Esophagus muscularis mucosa (tissue), 4 donors: ENCODE measurements at regions of chr5 and their contacts with region 1.

Region 1: DNA sequence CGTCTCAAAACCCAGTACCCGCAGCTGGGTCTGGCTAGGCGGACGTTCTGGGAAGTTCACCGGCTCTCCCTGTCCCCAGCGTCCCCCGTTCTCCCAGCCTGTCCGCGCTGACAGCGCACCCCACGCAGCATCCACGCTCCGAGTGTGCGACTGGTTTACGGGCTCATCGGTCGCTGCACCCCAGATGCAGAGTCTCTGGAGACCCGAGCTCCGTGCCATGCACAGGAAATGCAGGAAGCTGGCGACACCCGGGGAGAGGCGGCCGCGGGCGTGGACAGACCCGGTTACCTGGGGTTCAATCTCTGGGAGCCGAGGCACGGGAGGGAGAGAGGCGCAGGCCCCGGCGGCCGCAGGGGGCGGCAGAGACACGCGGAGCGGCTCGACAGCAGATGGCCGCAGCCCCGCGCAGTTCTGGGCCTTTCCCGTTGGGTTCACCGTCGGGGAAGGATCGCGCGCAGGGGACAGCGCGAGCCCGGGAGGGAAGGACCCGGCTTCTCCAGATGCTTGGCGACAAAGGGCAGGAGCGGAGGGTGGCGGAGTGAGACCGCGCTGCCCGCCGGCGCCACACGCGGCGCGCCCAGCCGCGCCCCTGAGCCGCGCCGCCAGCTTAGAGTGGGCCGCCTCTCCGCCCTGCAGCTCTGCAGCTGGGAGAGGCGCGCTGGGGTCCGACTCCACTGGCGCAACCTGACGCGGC is 558 bp downstream of the SHROOM1 start:
- DNase-seq: no peak
- H3K4me3 ChIP-seq: peak overlapping the region; percentile 76 to 87 (median 82)
- H3K27ac ChIP-seq: peak overlapping the region; percentile 79 to 90 (median 86)
- H3K4me1 ChIP-seq: peaks cover 9 to 49% (median 34%) of the 10 kb centered on the region in 4 donors
- H3K27me3 ChIP-seq: peaks cover 0 to 15% (median 0%) of the 10 kb centered on the region in 4 donors
- CTCF ChIP-seq: peak; percentile 70 to 99 (median 85)
- EP300 ChIP-seq: no peak
- POLR2A ChIP-seq: no peak

Region 2: DNA sequence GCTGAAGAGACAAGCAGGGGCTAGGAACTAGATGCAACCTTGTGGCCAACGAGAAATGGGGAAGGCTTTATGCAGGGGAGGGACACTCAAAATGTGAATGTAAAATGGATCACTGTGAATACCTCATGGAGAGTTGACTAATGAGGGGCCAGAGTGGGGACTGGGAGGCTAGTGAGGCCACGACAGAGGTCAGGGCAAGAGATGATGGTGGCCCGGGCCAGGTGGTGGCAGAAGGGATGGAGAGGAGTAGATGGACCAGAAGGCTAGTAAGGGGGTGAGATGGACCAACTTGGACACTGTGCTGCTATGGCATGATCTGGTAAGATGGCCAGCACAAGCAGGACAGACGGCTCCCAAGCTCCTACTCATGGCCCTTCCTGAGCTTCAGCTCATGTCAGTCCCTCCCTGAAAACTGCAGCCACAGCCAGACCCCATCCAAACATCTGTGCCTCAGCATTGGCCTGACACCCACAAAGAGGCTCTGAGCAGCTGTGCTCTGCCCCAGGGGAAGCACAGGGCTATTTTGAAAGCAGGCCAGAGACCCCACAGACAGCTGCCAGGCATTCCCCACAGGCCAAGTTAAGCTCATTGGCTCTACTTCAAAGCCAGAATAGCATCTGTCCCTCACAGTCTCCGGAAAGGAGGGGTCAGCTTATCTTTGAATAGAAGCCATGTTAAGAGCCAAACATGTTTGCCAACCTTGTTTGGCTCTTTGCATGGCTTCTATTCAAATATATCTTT is 624.3 kb before region 1 on chr5:
- intact Hi-C with region 1: no loop called
- DNase-seq: no peak
- H3K4me3 ChIP-seq: no peak overlapping the region
- H3K27ac ChIP-seq: no peak overlapping the region
- H3K4me1 ChIP-seq: peaks cover 8 to 40% (median 13%) of the 10 kb centered on the region in 4 donors
- H3K27me3 ChIP-seq: no peaks in the 10 kb centered on the region
- CTCF ChIP-seq: no peak
- EP300 ChIP-seq: no peak
- POLR2A ChIP-seq: no peak

Region 3: DNA sequence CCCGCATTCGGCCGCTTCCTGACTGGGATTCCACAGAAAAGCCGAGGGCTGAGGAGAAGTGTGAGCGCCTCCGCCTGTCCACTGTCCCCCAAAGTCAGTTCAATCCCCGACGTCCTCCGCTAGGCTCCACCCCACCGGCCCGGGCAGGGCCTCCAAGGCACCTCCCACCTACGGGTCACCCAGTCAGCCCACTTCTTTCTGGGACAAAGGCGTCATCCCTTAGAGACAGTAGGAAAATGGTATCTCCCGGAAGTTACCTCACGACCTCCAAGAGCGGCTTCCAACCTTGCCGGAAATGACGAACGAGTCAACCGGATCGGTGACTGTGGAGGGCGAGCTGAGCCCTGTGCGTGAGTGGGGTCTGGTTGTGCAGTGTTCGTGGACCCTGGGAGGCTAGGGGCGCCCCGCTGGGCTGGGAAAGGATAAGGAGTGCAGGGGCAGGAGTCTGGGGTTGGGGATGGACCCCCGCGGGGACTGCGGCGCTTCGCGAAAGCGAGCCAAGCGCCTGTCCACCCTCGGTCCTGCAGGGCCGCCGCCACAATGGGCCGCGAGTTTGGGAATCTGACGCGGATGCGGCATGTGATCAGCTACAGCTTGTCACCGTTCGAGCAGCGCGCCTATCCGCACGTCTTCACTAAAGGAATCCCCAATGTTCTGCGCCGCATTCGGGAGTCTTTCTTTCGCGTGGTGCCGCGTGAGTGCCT is 36.6 kb after region 1 on chr5 and contains the starts of genes GDF9 and UQCRQ:
- intact Hi-C with region 1: loop called (anchors 5 kb)
- DNase-seq: peak; percentile 98
- H3K4me3 ChIP-seq: peak within 1 kb of the TSS; percentile 70 to 91 (median 82)
- H3K27ac ChIP-seq: peak within 1 kb of the TSS; percentile 90 to 96 (median 92)
- H3K4me1 ChIP-seq: peaks cover 13 to 31% (median 21%) of the 10 kb centered on the region in 4 donors
- H3K27me3 ChIP-seq: no peaks in the 10 kb centered on the region
- CTCF ChIP-seq: peak; percentile 18 to 38 (median 23)
- EP300 ChIP-seq: no peak
- POLR2A ChIP-seq: peak; percentile 86
- total RNA-seq, gene GDF9: under 0.01 to 1.4 (median 0.23) TPM in 3 of 4 donors, not detected in the other
- total RNA-seq, gene UQCRQ: 113 to 184 (median 126) TPM

Region 4: DNA sequence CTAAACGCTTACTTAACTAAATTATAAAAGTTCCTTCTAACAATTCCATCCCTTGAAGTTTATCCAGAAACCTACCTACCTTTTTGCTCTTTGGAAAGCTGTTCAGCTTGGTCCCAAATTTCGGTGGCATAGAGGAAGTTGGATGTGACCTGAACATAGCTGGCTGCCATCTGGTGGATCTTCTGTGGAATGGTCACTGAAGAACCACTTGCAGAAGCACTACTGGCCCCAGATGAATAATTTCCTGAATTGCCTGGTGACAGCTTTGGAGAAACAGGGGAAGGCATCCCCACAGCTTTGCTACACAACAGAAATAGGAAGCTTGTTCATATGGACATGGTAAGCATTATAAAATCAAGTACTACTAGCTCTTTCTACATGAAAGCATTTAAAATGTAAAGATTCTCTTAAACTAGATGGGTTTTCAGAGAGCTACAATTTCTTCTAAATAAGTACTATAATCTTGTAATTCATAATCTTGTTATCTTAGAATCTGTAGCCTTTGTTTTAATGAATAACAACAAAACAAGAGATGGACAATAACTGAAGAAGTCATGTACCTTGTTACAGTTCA is 53.5 kb after region 1 on chr5:
- intact Hi-C with region 1: loop called (anchors 5 kb)
- DNase-seq: no peak
- H3K4me3 ChIP-seq: no peak overlapping the region
- H3K27ac ChIP-seq: no peak overlapping the region
- H3K4me1 ChIP-seq: peaks cover 0 to 2% (median 0%) of the 10 kb centered on the region in 4 donors
- H3K27me3 ChIP-seq: no peaks in the 10 kb centered on the region
- CTCF ChIP-seq: peak; percentile 59 to 72 (median 66)
- EP300 ChIP-seq: no peak
- POLR2A ChIP-seq: no peak